ENCODE measurements at regions of chr4 and their contacts with region 1.

Region 1: DNA sequence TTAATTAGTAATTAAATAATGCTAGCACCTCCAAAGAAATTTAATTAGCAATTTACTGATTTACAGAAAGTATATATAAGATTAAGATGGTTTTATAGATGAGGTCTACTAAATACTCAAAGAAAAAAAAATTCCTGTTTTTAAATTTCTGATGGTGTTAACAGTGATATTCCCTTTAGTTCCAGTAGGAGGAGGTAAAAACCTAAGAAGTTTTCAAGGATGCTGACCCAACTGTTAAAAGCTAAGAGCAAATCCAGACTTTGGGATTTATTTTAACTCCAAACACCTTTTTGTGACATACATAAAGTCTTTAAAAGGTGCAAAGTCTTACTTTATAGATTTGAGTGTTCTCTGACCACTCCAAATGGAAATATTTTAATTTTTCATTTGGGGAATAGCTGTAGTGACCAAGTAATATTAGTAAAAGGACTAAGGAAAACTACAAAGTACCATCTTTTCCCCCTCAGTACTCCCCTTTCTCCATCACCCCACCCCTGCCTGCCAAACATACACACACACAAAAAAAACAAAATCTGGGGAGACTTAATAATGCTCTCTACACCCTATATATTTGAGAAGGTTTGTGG is 34.2 kb upstream of the CSN1S1 start:
- DNase-seq: no peak
- H3K4me3 ChIP-seq: no peak overlapping the region
- H3K27ac ChIP-seq: no peak overlapping the region
- H3K27me3 ChIP-seq: peaks cover 0 to 6% (median 0%) of the 10 kb centered on the region in 45 donors
- CTCF ChIP-seq: peak in 53 of 56 donors; percentile 10 to 62 (median 40)

Region 2: DNA sequence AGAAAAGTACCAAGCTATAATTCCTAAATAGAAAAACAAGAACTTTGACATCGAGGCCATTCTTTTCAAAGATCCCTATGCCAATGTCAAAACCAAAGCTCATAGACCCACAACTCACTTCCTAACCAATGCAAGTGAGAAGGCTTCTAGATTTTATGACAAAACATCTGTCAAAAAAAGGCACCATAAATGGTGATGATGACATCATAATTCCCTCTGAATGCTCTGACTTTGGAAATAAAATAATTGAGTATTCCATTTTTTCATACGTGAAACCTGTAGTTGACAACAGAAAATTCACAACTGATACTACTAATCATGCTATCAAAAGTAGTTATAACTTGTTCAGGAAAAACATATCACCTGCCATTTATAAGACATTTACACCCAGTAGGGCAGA is 429.4 kb after region 1 on chr4:
- intact Hi-C with region 1: no loop called
- DNase-seq: no peak
- H3K4me3 ChIP-seq: no peak overlapping the region
- H3K27ac ChIP-seq: no peak overlapping the region
- H3K27me3 ChIP-seq: no peaks in the 10 kb centered on the region
- CTCF ChIP-seq: no peak

Region 3: DNA sequence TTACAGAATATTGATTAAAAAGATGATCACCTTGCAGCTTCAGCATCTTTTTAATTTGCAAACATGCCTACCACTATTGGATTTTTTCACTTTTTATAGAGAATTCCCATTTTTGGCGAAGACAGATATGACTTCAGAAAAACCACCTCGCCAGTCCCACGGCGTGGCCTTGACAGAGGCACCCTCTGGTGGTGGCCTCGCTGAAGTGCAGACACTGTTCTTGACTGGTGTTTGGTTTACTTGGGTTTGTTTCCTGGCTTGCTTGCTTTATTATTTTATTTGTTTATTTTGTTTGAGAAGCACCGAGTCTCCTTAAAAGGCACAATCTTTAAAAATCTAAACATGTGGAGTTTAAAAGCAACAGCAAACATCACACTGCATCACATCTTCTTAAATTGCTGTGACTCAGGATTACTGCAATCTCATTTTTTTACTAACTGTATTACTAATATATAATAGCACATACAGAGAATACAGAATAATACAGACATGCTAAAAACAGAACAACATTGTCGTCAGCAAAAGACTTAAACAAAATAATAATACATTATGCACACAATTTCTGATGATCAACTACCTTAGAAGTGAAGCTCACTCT is 608.6 kb after region 1 on chr4:
- intact Hi-C with region 1: loop called in 1 of 2 experiments (anchors 10 kb)
- DNase-seq: peak; percentile 16 to 79 (median 60)
- H3K4me3 ChIP-seq: no peak overlapping the region
- H3K27ac ChIP-seq: no peak overlapping the region
- H3K27me3 ChIP-seq: peaks cover 0 to 19% (median 3%) of the 10 kb centered on the region in 45 donors
- CTCF ChIP-seq: peak; percentile 72 to 98 (median 90)